ENCODE measurements at regions of chr19 and their contacts with region 1.

Region 1: DNA sequence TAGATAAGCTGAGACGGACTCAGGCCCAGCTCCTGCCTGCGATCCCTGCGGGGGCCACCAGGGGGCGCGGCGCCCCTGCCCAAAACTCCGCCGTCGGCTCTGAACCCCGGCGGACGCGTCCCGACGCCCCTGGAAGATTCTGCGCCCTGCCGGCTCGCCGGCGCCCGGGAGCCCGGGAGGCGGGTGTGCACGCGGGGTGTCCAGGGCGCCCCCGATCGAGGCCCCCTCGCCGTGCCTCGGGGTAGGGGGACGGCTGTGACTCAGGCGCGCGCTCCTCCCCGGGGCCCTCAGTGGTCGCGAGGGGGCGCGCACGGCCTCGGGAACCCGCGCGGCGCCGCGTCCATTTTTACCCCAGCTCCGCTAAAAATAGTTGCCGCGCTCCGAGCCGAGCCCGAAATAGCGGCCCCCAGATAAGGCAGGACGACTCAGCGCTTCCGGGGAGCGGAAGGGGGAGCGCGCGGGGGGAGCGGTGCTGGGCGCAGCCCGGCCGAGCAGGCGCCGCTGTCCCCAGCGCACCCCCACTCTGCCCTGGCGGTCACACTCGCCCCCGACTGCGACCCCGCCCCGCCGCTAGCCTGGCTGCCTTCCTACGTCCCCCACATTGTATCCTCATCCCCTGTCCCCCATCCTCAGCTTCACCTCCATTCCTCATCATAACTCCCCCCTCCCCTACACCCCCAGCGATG is 16.0 kb upstream of the ERCC1 start:
- DNase-seq: peak; percentile 93
- H3K4me3 ChIP-seq: peak overlapping the region; percentile 57 to 73
- H3K27ac ChIP-seq: peak overlapping the region in 1 of 2 experiments; percentile 83; a peak in 3 of 4 replicates
- H3K4me1 ChIP-seq: peaks cover 5 to 14% of the 10 kb centered on the region in 2 experiments; a peak in 1 of 4 replicates
- H3K27me3 ChIP-seq: no peaks in the 10 kb centered on the region
- CTCF ChIP-seq: peak; percentile 99
- EP300 ChIP-seq: 0 out of 4 replicates have a peak, but pooled peaks of 1 of the 2 experiments have one; percentile 13
- RAD21 ChIP-seq: peak; percentile 74

Region 2: DNA sequence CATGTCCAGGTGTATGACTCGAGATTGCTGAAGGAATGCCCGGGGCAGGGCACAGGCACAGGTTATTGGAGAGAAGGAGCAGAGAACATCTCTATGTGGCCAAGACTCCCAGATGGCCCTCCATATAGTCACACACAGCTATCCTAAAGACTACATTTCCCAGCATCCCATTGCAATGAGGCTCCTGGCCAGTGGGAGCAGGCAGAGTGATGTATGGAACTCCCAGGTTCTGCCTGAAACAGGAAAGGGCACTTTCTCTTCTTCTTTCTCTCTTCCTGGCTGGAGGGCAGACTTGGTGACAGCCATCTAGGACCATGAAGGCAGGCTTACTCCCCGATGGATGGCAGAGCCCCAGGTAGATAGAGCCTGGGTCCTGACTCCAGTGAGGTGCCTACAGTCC is 48.4 kb before region 1 on chr19:
- CTCF ChIA-PET with region 1: no interaction called
- POLR2A ChIA-PET with region 1: no interaction called
- DNase-seq: peak; percentile 71
- H3K4me3 ChIP-seq: no peak overlapping the region
- H3K27ac ChIP-seq: no peak overlapping the region
- H3K4me1 ChIP-seq: no peaks in the 10 kb centered on the region; a peak in 1 of 4 replicates
- H3K27me3 ChIP-seq: no peaks in the 10 kb centered on the region
- CTCF ChIP-seq: no peak
- EP300 ChIP-seq: no peak
- RAD21 ChIP-seq: no peak

Region 3: DNA sequence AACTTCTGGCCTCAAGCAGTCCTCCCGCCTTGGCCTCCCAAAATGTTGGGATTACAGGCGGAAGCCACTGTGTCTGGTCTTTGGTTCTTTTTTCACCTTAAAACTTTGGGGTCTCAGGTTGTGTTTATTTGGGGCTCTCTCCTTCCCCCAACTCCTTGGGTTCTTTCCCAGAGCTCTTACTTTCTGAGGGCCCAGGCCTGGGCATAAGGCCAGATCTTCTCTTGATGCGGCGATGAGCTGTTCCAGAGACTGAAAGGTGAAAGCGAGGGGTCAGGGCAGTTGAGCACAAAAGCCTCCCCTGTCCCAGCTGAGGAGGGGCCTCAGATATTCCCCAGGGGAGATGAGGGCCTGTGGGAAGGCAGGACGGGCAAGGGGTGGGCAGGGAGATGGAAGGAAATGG is 26.2 kb before region 1 on chr19:
- CTCF ChIA-PET with region 1: interaction called, 15 read pairs
- POLR2A ChIA-PET with region 1: no interaction called
- DNase-seq: no peak
- H3K4me3 ChIP-seq: no peak overlapping the region
- H3K27ac ChIP-seq: no peak overlapping the region
- H3K4me1 ChIP-seq: no peaks in the 10 kb centered on the region
- H3K27me3 ChIP-seq: no peaks in the 10 kb centered on the region
- CTCF ChIP-seq: no peak
- EP300 ChIP-seq: no peak
- RAD21 ChIP-seq: no peak

Region 4: GRCh38 chr19:45450012-45450333 is 10.3 kb after region 1 on chr19:
- CTCF ChIA-PET with region 1: interaction called, 38 read pairs
- POLR2A ChIA-PET with region 1: interaction called, 3 read pairs
- DNase-seq: no peak
- H3K4me3 ChIP-seq: peak overlapping the region; percentile 55 to 69
- H3K27ac ChIP-seq: peak overlapping the region in 1 of 2 experiments; percentile 92; a peak in 3 of 4 replicates
- H3K4me1 ChIP-seq: peaks cover under 1 to 8% of the 10 kb centered on the region in 2 experiments; a peak in 2 of 4 replicates
- H3K27me3 ChIP-seq: no peaks in the 10 kb centered on the region
- CTCF ChIP-seq: no peak
- EP300 ChIP-seq: no peak
- RAD21 ChIP-seq: no peak

Region 5: GRCh38 chr19:45478454-45479238 is 38.9 kb after region 1 on chr19:
- CTCF ChIA-PET with region 1: interaction called, 870 read pairs
- POLR2A ChIA-PET with region 1: interaction called, 15 read pairs
- DNase-seq: peak; percentile 73
- H3K4me3 ChIP-seq: peak overlapping the region; percentile 53 to 72
- H3K27ac ChIP-seq: peak overlapping the region; percentile 92 to 95
- H3K4me1 ChIP-seq: peaks cover 0 to 5% of the 10 kb centered on the region in 2 experiments; a peak in 2 of 4 replicates
- H3K27me3 ChIP-seq: no peaks in the 10 kb centered on the region
- CTCF ChIP-seq: peak; percentile 95
- EP300 ChIP-seq: peak in 1 of 2 experiments; percentile 36; a peak in 1 of 4 replicates
- RAD21 ChIP-seq: peak; percentile 93

Region 6: DNA sequence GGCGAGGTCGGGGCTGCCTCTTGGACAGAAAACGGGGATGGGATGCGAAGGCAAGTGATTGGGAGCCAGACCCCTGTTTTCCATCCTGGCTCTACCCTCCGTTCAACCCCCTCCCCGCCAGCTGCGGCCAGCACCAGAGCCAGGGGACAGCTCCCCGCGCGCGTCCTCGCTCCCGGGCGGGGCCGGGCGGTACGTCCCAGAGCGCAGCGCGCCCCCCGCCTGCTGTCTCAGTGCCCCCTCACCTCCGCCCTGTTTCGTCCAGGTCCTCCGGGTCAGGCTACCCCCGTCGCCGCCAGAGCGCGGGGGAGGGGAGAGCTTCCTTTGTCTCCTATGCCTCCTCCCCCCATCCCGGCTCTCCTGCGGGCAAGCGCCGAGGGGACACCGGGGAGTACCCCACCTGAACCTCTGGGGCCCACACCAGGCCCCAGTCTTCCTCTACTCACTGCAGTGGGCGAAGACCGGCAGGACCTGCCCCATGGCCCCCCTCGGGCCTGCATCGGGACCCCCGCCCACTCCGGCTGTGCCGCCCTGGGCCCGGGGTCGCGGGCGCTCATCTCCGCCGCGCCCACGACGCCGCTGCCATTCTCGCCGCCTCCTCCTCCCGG is 56.7 kb after region 1 on chr19:
- CTCF ChIA-PET with region 1: interaction called, 35 read pairs
- POLR2A ChIA-PET with region 1: no interaction called
- DNase-seq: peak; percentile 80
- H3K4me3 ChIP-seq: peak overlapping the region; percentile 79 to 83
- H3K27ac ChIP-seq: peak overlapping the region in 1 of 2 experiments; percentile 73; a peak in 2 of 4 replicates
- H3K4me1 ChIP-seq: peaks cover 3 to 16% of the 10 kb centered on the region in 2 experiments; a peak in 2 of 4 replicates
- H3K27me3 ChIP-seq: no peaks in the 10 kb centered on the region
- CTCF ChIP-seq: no peak
- EP300 ChIP-seq: no peak
- RAD21 ChIP-seq: no peak

Region 7: GRCh38 chr19:45681391-45682015 is 241.8 kb after region 1 on chr19:
- CTCF ChIA-PET with region 1: interaction called, 13 read pairs
- POLR2A ChIA-PET with region 1: no interaction called
- DNase-seq: peak; percentile 91
- H3K4me3 ChIP-seq: peak overlapping the region; percentile 40 to 64
- H3K27ac ChIP-seq: peak overlapping the region; percentile 34 to 36; a peak in 3 of 4 replicates
- H3K4me1 ChIP-seq: peaks cover 0 to 14% of the 10 kb centered on the region in 2 experiments; a peak in 1 of 4 replicates
- H3K27me3 ChIP-seq: no peaks in the 10 kb centered on the region
- CTCF ChIP-seq: peak; percentile 88
- EP300 ChIP-seq: no peak
- RAD21 ChIP-seq: peak; percentile 66

Measured in SK-N-SH (cell line).